A549 (cell line): ENCODE measurements at regions of chr11 and their contacts with region 1.

Region 1: DNA sequence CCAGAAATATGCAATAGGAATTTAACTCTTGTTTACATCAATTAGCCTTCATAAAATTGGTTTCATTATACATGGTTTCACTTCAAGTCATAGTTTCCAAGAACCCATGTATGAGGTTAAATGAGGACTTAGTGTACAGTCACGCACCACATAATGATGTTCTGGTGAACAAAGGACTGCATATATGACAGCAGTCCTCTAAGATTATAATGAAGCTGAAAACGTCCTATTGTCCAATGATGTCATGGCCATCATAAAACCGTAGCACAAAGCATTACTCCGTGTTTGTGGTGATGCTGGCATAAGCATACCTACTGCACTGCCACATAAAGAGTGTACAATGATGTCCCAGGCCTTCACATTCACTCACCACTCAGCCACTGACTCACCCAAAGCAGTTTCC is 31.1 kb downstream of the SMCO4 start:
- DNase-seq: no peak
- ATAC-seq: no peak
- H3K4me3 ChIP-seq: no peak overlapping the region
- H3K27ac ChIP-seq: no peak overlapping the region
- H3K4me1 ChIP-seq: no peaks in the 10 kb centered on the region
- CTCF ChIP-seq: no peak
- EP300 ChIP-seq: no peak
- POLR2A ChIP-seq: no peak
- RAD21 ChIP-seq: no peak

Region 2: GRCh38 chr11:93524173-93524536 is 12.1 kb after region 1 on chr11:
- CTCF ChIA-PET with region 1: interaction called, 10 read pairs
- POLR2A ChIA-PET with region 1: no interaction called
- DNase-seq: no peak
- ATAC-seq: no peak
- H3K4me3 ChIP-seq: no peak overlapping the region
- H3K27ac ChIP-seq: no peak overlapping the region
- H3K4me1 ChIP-seq: no peaks in the 10 kb centered on the region
- CTCF ChIP-seq: no peak
- EP300 ChIP-seq: no peak
- POLR2A ChIP-seq: no peak
- RAD21 ChIP-seq: no peak

Region 3: DNA sequence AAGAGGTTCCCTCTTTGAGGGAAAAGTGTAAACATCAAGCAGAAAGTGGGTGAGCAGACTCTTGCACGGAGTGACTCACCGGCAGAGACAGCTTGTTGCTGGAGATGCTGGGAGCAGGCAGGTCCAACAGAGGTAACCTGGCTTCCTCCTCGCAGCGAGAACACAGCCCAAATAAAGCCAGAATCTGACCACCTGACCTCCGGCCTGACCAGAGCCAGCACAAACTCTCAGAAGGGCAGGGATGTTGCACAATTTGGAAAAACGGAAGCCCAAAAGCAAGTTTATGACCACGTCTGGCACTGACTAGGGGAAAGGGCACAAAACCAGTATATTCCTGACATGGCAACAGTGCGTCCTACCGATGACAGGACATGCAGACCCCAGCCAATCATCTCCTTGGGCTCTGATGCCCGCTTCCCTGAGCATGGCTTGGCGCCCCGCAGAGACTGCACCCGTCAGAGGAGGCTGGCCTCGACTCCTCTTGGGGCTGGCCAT is 25.7 kb after region 1 on chr11:
- CTCF ChIA-PET with region 1: no interaction called
- POLR2A ChIA-PET with region 1: no interaction called
- DNase-seq: no peak
- ATAC-seq: no peak
- H3K4me3 ChIP-seq: no peak overlapping the region
- H3K27ac ChIP-seq: no peak overlapping the region
- H3K4me1 ChIP-seq: peaks cover 13% of the 10 kb centered on the region
- CTCF ChIP-seq: no peak
- EP300 ChIP-seq: no peak
- POLR2A ChIP-seq: no peak
- RAD21 ChIP-seq: no peak